ENCODE measurements at regions of chr15 and their contacts with region 1.

Region 1: GRCh38 chr15:78374436-78375393 is 34.6 kb downstream of the CRABP1 start:
- DNase-seq: peak; percentile 85 to 91
- H3K4me3 ChIP-seq: peak overlapping the region; percentile 13; the same call in 1 of the 2 replicates
- H3K4me3 Mint-ChIP-seq: peak overlapping the region; percentile 75
- H3K27ac Mint-ChIP-seq: peak overlapping the region; percentile 100
- H3K4me1 ChIP-seq: peaks cover 33% of the 10 kb centered on the region
- H3K4me1 Mint-ChIP-seq: peaks cover 24% of the 10 kb centered on the region
- H3K27me3 ChIP-seq: no peaks in the 10 kb centered on the region
- H3K27me3 Mint-ChIP-seq: no peaks in the 10 kb centered on the region
- CTCF ChIP-seq: no peak

Region 2: DNA sequence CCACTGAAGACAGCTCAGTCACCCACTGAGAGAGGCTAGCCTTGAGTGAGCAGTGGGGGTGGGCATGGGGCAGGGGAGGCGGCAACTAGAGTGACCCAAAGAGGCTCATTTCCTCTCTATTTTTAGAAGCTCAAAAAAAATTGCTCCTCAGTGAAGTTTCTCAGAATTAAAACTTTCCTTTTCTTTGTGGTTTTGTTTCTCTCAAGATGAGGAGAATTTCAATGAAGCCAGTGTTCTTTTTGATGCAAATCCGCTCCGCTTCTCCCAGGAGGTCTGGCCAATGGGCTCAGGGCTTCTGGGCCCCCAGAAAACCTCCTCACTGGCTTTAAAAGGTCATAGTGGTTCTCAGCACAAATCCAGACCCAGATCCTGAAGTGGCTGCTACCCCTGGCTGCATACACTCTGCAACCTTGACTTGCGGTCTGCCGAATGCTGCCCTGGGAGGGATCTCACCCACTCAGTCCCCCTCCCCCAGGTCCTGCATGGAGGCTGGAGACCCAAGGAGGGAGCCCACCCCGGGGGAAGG is 140.1 kb before region 1 on chr15 and contains the start of gene ACSBG1:
- CTCF ChIA-PET with region 1: no interaction called
- POLR2A ChIA-PET with region 1: no interaction called
- intact Hi-C with region 1: no loop called
- DNase-seq: no peak
- H3K4me3 ChIP-seq: no peak within 1 kb of the TSS
- H3K4me3 Mint-ChIP-seq: no peak within 1 kb of the TSS
- H3K27ac Mint-ChIP-seq: no peak within 1 kb of the TSS
- H3K4me1 ChIP-seq: no peaks in the 10 kb centered on the region
- H3K4me1 Mint-ChIP-seq: no peaks in the 10 kb centered on the region
- H3K27me3 ChIP-seq: no peaks in the 10 kb centered on the region
- H3K27me3 Mint-ChIP-seq: peaks cover 6% of the 10 kb centered on the region
- CTCF ChIP-seq: no peak
- total RNA-seq, gene ACSBG1: not detected in 2 replicates

Region 3: DNA sequence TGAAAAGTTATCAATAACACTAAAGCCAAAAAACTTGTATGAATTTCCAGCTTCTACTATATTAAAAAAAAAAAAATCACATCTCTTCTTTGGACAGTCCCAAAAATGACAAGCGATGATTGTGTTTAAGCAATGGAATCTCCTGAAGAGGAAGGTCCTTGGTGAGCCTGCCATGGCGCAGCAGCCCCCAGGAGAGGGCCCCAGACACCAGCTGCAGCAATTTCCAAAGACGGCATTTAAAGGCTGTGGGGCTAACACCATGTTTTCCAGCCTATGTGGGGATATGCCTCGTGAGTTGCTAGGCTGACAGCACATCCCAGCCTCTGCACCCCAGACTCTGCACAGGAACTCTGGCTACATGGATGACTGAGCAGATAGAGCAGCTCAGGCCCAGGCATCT is 90.0 kb before region 1 on chr15:
- CTCF ChIA-PET with region 1: no interaction called
- POLR2A ChIA-PET with region 1: no interaction called
- intact Hi-C with region 1: no loop called
- DNase-seq: no peak
- H3K4me3 ChIP-seq: no peak overlapping the region
- H3K4me3 Mint-ChIP-seq: no peak overlapping the region
- H3K27ac Mint-ChIP-seq: no peak overlapping the region
- H3K4me1 ChIP-seq: no peaks in the 10 kb centered on the region
- H3K4me1 Mint-ChIP-seq: no peaks in the 10 kb centered on the region
- H3K27me3 ChIP-seq: no peaks in the 10 kb centered on the region
- H3K27me3 Mint-ChIP-seq: no peaks in the 10 kb centered on the region
- CTCF ChIP-seq: peak in 1 of 2 experiments; percentile 21

Region 4: DNA sequence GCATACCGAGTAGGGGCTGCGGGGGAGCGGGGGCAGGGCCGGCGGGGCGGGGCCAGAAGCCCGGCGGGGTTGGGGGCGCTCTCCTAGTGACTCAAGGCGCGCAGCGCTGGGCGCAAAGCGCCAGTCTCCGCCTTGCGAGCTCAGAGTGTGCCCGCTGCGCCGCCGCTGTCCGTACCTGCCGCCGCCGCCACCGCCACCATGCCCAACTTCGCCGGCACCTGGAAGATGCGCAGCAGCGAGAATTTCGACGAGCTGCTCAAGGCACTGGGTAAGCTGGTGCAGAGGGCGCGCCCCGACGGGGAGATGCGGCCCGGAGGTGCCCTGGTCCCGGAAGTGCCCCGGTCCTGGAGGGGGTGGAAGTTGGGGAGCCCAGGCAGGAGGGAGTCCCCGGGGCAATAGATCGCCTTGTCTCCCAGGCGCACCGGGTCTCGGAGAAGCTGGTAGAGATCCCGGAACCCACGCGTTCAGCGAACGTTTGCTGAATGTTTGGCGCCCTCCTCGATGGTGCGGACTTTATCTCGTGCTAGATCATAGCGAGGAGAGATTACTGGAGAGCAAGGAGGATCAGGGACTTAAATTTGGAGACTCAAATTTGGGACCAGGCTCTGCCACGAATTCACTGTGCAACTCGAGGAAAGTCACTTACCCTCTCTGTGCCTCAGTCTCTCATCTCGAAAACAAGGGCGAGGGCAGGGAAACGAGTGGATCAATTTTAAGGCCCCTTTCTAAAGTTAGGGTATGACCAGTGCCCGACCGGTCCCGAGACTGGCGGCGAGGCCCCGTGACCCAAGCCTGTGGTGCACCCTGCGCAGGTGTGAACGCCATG is 34.3 kb before region 1 on chr15 and contains the start of gene CRABP1:
- CTCF ChIA-PET with region 1: no interaction called
- POLR2A ChIA-PET with region 1: interaction called, 7 read pairs
- intact Hi-C with region 1: loop called (anchors 5 kb)
- DNase-seq: peak in 1 of 2 experiments; percentile 49
- H3K4me3 ChIP-seq: peak within 1 kb of the TSS; percentile 68
- H3K4me3 Mint-ChIP-seq: peak within 1 kb of the TSS; percentile 77
- H3K27ac Mint-ChIP-seq: no peak within 1 kb of the TSS
- H3K4me1 ChIP-seq: 0 out of 2 replicates have a peak, but pooled peaks cover 5% of the 10 kb centered on the region
- H3K4me1 Mint-ChIP-seq: peaks cover 11% of the 10 kb centered on the region
- H3K27me3 ChIP-seq: no peaks in the 10 kb centered on the region
- H3K27me3 Mint-ChIP-seq: no peaks in the 10 kb centered on the region
- CTCF ChIP-seq: no peak
- total RNA-seq, gene CRABP1: 113 and 116 TPM in 2 replicates

Region 5: DNA sequence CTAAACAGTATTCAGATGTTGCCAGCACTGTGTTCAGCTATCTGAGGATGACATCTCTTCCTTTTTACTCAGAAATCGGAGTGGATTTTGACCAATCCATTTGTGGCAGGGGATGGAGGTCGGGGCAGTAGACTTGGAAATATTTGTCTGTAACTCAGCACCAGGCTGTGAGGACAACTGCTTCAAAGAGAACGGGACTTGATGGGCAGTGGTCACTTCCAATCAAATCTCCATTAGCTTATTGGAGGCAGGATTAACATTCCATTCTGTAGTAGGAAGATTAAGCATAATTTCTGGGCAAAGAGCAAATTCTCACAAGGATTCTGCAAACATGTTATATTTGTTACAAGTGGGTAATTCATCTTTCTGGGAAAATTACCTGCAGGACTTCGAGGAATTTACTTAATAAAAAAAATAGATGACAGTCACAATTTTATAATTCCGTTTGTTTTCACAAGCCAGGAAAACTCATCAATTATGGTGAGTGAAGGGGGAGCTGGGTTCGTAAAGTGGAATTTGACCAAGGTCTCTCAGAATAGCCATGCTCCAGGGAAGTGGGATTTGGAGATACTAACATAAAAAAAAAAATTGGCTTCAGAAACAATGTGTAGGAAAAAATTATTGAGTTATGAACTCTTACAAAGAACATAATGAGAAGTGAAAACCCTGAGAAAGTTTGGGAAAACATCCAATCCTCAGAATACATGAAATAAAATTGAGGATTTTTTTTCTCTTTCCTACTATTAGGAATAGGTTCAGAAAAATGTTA is 16.4 kb before region 1 on chr15:
- CTCF ChIA-PET with region 1: interaction called, 4 read pairs
- POLR2A ChIA-PET with region 1: interaction called, 9 read pairs
- intact Hi-C with region 1: loop called (anchors 1 kb)
- DNase-seq: peak; percentile 83 to 84
- H3K4me3 ChIP-seq: no peak overlapping the region
- H3K4me3 Mint-ChIP-seq: peak overlapping the region; percentile 65
- H3K27ac Mint-ChIP-seq: peak overlapping the region; percentile 74
- H3K4me1 ChIP-seq: peaks cover 27% of the 10 kb centered on the region
- H3K4me1 Mint-ChIP-seq: peaks cover 23% of the 10 kb centered on the region
- H3K27me3 ChIP-seq: no peaks in the 10 kb centered on the region
- H3K27me3 Mint-ChIP-seq: no peaks in the 10 kb centered on the region
- CTCF ChIP-seq: no peak

Region 6: GRCh38 chr15:78396976-78397375 is 22.3 kb after region 1 on chr15:
- CTCF ChIA-PET with region 1: no interaction called
- POLR2A ChIA-PET with region 1: no interaction called
- intact Hi-C with region 1: loop called (anchors 1 kb)
- DNase-seq: peak in 1 of 2 experiments; percentile 62
- H3K4me3 ChIP-seq: no peak overlapping the region
- H3K4me3 Mint-ChIP-seq: no peak overlapping the region
- H3K27ac Mint-ChIP-seq: no peak overlapping the region
- H3K4me1 ChIP-seq: no peaks in the 10 kb centered on the region
- H3K4me1 Mint-ChIP-seq: no peaks in the 10 kb centered on the region
- H3K27me3 ChIP-seq: no peaks in the 10 kb centered on the region
- H3K27me3 Mint-ChIP-seq: no peaks in the 10 kb centered on the region
- CTCF ChIP-seq: peak in 1 of 2 experiments; percentile 49

Region 7: GRCh38 chr15:78415286-78415685 is 40.6 kb after region 1 on chr15:
- CTCF ChIA-PET with region 1: interaction called, 6 read pairs
- POLR2A ChIA-PET with region 1: no interaction called
- intact Hi-C with region 1: loop called (anchors 2 kb)
- DNase-seq: peak in 1 of 2 experiments; percentile 34
- H3K4me3 ChIP-seq: no peak overlapping the region
- H3K4me3 Mint-ChIP-seq: no peak overlapping the region
- H3K27ac Mint-ChIP-seq: no peak overlapping the region
- H3K4me1 ChIP-seq: peaks cover 7% of the 10 kb centered on the region; the same call in 1 of the 2 replicates
- H3K4me1 Mint-ChIP-seq: peaks cover 7% of the 10 kb centered on the region
- H3K27me3 ChIP-seq: no peaks in the 10 kb centered on the region
- H3K27me3 Mint-ChIP-seq: peaks cover 2% of the 10 kb centered on the region
- CTCF ChIP-seq: peak in 1 of 2 experiments; percentile 37

Region 8: GRCh38 chr15:78437762-78438302 is 63.1 kb after region 1 on chr15 and contains the start of gene IREB2:
- CTCF ChIA-PET with region 1: no interaction called
- POLR2A ChIA-PET with region 1: interaction called, 4 read pairs
- intact Hi-C with region 1: loop called (anchors 2 kb)
- DNase-seq: peak; percentile 95 to 97
- H3K4me3 ChIP-seq: peak within 1 kb of the TSS; percentile 99
- H3K4me3 Mint-ChIP-seq: peak within 1 kb of the TSS; percentile 76
- H3K27ac Mint-ChIP-seq: peak within 1 kb of the TSS; percentile 4
- H3K4me1 ChIP-seq: peaks cover 18% of the 10 kb centered on the region
- H3K4me1 Mint-ChIP-seq: no peaks in the 10 kb centered on the region
- H3K27me3 ChIP-seq: no peaks in the 10 kb centered on the region
- H3K27me3 Mint-ChIP-seq: no peaks in the 10 kb centered on the region
- CTCF ChIP-seq: no peak
- total RNA-seq, gene IREB2: 77.6 and 82.9 TPM in 2 replicates

Measured in Caco-2 (cell line).